Mammary epithelial cell (primary cell): ENCODE measurements at regions of chr5 and their contacts with region 1.

Region 1: GRCh38 chr5:81006947-81007636 is 46.9 kb downstream of the RASGRF2 start:
- DNase-seq: no peak
- H3K4me3 ChIP-seq: no peak overlapping the region
- H3K27ac ChIP-seq: no peak overlapping the region
- H3K4me1 ChIP-seq: no peaks in the 10 kb centered on the region
- H3K27me3 ChIP-seq: no peaks in the 10 kb centered on the region
- CTCF ChIP-seq: no peak

Region 2: DNA sequence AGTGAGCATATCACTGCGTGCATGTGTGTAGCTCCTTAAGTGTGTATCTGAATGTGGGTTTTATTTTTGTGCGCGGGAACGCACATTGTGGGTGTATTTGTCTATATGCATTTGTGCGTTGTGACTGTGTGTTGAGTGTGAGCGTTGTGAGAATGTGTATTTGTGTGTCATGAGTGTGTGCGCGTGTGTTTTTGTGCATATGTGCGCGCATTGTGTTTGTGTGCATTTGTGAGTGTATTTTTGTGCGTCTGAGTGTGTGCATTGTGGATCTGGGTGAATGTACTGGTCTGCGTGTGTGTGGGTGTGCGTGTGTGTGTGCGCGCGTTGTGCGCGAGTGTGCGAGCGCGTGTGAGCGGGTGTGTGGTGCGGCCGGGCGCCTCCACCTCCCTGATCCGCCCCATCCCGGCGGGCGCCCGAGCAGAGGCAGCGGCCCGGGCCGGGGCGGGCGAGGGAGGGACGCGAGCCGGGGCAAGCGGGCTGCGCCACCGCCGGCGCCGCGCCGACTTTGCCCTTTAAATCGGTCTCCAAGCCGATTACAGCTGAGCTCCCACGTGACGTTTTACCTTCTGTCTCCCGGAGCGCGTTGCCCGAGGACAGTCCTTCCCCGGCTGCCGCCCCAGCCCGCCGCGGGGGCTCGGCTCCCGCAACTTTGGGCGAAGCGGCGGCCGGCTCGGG is 47.2 kb before region 1 on chr5 and contains the start of gene RASGRF2:
- CTCF ChIA-PET with region 1: no interaction called
- dilution Hi-C with region 1: loop called (anchors 5 kb)
- in situ Hi-C with region 1: no loop called
- intact Hi-C with region 1: no loop called
- DNase-seq: no peak
- H3K4me3 ChIP-seq: peak within 1 kb of the TSS in 2 of 3 experiments; percentile 32 to 35
- H3K27ac ChIP-seq: no peak within 1 kb of the TSS
- H3K4me1 ChIP-seq: no peaks in the 10 kb centered on the region
- H3K27me3 ChIP-seq: peaks cover 19% of the 10 kb centered on the region
- CTCF ChIP-seq: no peak
- total RNA-seq, gene RASGRF2: 0.19 to 2.0 TPM